HCT116 (cell line): ENCODE measurements at regions of chr1 and their contacts with region 1.

Region 1: DNA sequence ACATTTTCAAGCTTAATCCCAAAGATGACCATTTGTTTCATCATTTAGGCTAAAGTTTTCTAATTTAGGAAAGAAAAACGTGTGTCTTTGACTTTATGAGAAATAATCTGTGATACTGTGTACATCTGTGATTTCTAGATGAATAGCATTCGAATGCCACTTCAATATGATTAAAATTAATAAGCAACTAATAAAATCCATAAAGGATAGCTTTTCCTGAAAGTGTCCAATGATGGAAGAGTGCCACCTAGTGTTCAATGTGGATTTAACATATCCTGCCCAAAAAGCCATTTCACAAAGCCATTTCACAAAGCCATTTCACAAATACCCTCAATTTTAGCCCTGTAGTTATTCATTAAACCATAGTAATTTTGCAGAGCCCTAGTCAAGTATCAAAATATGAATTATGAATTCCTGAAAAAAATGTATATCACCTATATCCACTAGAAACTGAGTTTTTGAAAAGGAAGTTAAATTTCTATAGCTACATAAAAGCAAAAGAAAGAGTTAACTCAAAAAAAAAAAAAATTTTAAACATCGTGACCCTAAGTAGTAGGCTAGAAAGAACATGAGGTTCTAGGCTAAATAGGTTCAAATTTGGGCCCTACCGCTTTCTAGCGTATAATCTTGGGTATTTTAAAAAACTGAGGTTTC is 19.1 kb downstream of the NME7 start:
- DNase-seq: peak; percentile 57
- ATAC-seq: peak; percentile 40; the same call in 1 of the 2 replicates
- H3K4me3 ChIP-seq: no peak overlapping the region
- H3K27ac ChIP-seq: no peak overlapping the region
- H3K4me1 ChIP-seq: no peaks in the 10 kb centered on the region
- H3K27me3 ChIP-seq: no peaks in the 10 kb centered on the region
- CTCF ChIP-seq: peak; percentile 59 to 80 (median 72)
- POLR2A ChIP-seq: no peak
- RAD21 ChIP-seq: peak; percentile 93

Region 2: GRCh38 chr1:168342572-168343280 is 1005.8 kb before region 1 on chr1:
- CTCF ChIA-PET with region 1: interaction called, 13 read pairs
- POLR2A ChIA-PET with region 1: no interaction called
- RAD21 ChIA-PET with region 1: interaction called in 1 of 2 experiments, 7 read pairs
- intact Hi-C with region 1: loop called (anchors 1 kb)
- DNase-seq: peak; percentile 82
- ATAC-seq: peak; percentile 96
- H3K4me3 ChIP-seq: peak overlapping the region in 1 of 2 experiments; percentile 31; a peak in 2 of 4 replicates
- H3K27ac ChIP-seq: peak overlapping the region; percentile 38; the same call in 1 of the 2 replicates
- H3K4me1 ChIP-seq: peaks cover 11 to 21% of the 10 kb centered on the region in 2 experiments; a peak in 3 of 4 replicates
- H3K27me3 ChIP-seq: no peaks in the 10 kb centered on the region
- CTCF ChIP-seq: peak; percentile 58 to 87 (median 65)
- POLR2A ChIP-seq: no peak
- RAD21 ChIP-seq: peak; percentile 98

Region 3: DNA sequence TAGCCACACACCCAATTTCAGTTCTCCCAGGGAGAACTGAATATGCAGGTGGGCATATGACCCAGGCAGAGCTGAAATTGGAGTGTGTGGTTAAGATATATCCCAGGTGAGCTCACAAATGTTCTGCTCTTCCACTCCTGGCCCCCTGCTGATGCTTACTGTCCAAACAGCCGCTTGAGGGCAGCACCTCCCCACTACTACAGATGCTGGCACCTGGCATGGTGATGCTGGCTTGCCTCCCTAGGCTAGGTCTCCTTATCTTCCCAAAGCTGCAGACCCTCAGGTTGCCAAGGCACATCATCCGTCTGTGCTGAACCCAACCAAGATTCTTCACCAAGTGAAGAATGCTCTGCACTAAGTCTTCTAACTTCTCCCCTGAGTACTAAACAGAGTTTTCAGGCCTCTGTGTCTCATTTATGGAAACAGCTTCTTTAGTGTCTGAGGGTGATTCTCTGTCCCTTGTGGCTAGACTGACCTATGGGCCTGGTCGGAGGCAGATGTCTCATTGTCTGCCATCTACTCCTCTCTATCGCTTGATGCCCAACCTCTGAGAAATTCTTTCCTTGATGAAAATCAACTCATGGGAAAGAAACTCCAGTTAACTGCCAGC is 744.9 kb before region 1 on chr1:
- CTCF ChIA-PET with region 1: interaction called, 105 read pairs
- POLR2A ChIA-PET with region 1: interaction called, 3 read pairs
- RAD21 ChIA-PET with region 1: interaction called, 11 to 24 read pairs
- intact Hi-C with region 1: loop called (anchors 1 kb)
- DNase-seq: peak; percentile 56
- ATAC-seq: peak; percentile 98
- H3K4me3 ChIP-seq: no peak overlapping the region
- H3K27ac ChIP-seq: no peak overlapping the region
- H3K4me1 ChIP-seq: no peaks in the 10 kb centered on the region
- H3K27me3 ChIP-seq: no peaks in the 10 kb centered on the region
- CTCF ChIP-seq: peak; percentile 82 to 93 (median 87)
- POLR2A ChIP-seq: no peak
- RAD21 ChIP-seq: peak; percentile 95

Region 4: GRCh38 chr1:168637350-168637991 is 711.0 kb before region 1 on chr1:
- CTCF ChIA-PET with region 1: interaction called, 28 read pairs
- POLR2A ChIA-PET with region 1: interaction called, 4 read pairs
- RAD21 ChIA-PET with region 1: interaction called in 1 of 2 experiments, 7 read pairs
- intact Hi-C with region 1: no loop called
- DNase-seq: peak; percentile 69
- ATAC-seq: peak; percentile 94
- H3K4me3 ChIP-seq: no peak overlapping the region
- H3K27ac ChIP-seq: no peak overlapping the region
- H3K4me1 ChIP-seq: peaks cover 0 to 9% of the 10 kb centered on the region in 2 experiments; a peak in 1 of 4 replicates
- H3K27me3 ChIP-seq: no peaks in the 10 kb centered on the region
- CTCF ChIP-seq: peak; percentile 43 to 85 (median 82); a peak in 5 of 6 replicates
- POLR2A ChIP-seq: no peak
- RAD21 ChIP-seq: peak; percentile 65

Region 5: GRCh38 chr1:169115891-169116585 is 232.5 kb before region 1 on chr1:
- CTCF ChIA-PET with region 1: interaction called, 15 read pairs
- POLR2A ChIA-PET with region 1: no interaction called
- RAD21 ChIA-PET with region 1: no interaction called
- intact Hi-C with region 1: loop called (anchors 5 kb)
- DNase-seq: no peak
- ATAC-seq: no peak
- H3K4me3 ChIP-seq: no peak overlapping the region
- H3K27ac ChIP-seq: no peak overlapping the region
- H3K4me1 ChIP-seq: peaks cover 54 to 91% of the 10 kb centered on the region in 2 experiments
- H3K27me3 ChIP-seq: no peaks in the 10 kb centered on the region
- CTCF ChIP-seq: no peak
- POLR2A ChIP-seq: no peak
- RAD21 ChIP-seq: no peak

Region 6: DNA sequence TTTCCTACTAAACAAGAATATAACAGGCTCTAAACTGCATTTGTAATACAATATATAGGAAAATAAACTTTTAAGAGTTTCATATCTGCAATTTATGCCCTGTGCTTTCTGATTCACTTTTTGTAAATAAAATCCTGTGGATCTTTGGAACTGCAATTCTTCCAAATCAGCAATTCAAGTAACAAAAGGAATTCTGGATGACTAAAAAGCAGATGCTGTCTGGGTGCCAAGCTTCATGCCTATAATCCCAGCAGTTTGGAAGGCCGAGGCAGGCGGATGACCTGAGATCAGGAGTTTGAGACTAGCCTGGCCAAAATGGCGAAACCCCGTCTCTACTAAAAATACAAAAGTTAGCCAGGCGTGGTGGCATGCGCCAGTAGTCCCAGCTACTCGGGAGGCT is 12.8 kb after region 1 on chr1:
- CTCF ChIA-PET with region 1: interaction called, 16 read pairs
- POLR2A ChIA-PET with region 1: no interaction called
- RAD21 ChIA-PET with region 1: no interaction called
- intact Hi-C with region 1: no loop called
- DNase-seq: no peak
- ATAC-seq: no peak
- H3K4me3 ChIP-seq: no peak overlapping the region
- H3K27ac ChIP-seq: no peak overlapping the region
- H3K4me1 ChIP-seq: peaks cover 9 to 26% of the 10 kb centered on the region in 2 experiments
- H3K27me3 ChIP-seq: no peaks in the 10 kb centered on the region
- CTCF ChIP-seq: no peak
- POLR2A ChIP-seq: no peak
- RAD21 ChIP-seq: no peak